Heart left ventricle (tissue), 16 donors: ENCODE measurements at regions of chr18 and their contacts with region 1.

Region 1: GRCh38 chr18:50183556-50183955 is 11.4 kb downstream of the MYO5B start:
- DNase-seq: no peak
- ATAC-seq: no peak
- H3K4me3 ChIP-seq: no peak overlapping the region
- H3K27ac ChIP-seq: no peak overlapping the region
- H3K4me1 ChIP-seq: no peaks in the 10 kb centered on the region
- H3K27me3 ChIP-seq: peaks cover 0 to 25% (median 0%) of the 10 kb centered on the region in 9 donors
- CTCF ChIP-seq: no peak
- POLR2A ChIP-seq: no peak

Region 2: DNA sequence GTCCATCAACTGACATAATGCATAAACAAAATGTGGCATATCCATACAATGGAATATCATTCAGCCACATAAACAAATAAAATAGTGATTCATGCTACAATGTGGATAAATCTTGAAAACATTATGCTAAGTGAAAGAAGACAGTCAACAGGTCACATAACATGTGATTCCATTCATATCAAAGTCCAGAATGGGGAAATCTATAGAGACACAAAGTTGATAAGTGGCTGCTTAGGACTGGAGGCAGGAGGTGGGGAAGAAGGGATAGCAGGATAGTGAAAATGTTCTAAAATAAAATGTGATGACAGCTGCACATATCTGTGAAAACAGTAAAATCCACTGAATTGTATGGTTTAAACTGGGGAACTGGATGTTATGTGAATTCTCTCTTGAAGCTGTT is 64.0 kb after region 1 on chr18:
- intact Hi-C with region 1: loop called in 1 of 10 experiments (anchors 2 kb)
- DNase-seq: no peak
- ATAC-seq: no peak
- H3K4me3 ChIP-seq: no peak overlapping the region
- H3K27ac ChIP-seq: no peak overlapping the region
- H3K4me1 ChIP-seq: no peaks in the 10 kb centered on the region
- H3K27me3 ChIP-seq: no peaks in the 10 kb centered on the region
- CTCF ChIP-seq: no peak
- POLR2A ChIP-seq: no peak